ENCODE measurements at regions of chr19 and their contacts with region 1.

Region 1: GRCh38 chr19:48110350-48110966 is at the start of gene PLA2G4C:
- DNase-seq: peak; percentile 94 to 100
- ATAC-seq: peak; percentile 80 to 83
- H3K4me3 ChIP-seq: peak within 1 kb of the TSS; percentile 48
- H3K27ac ChIP-seq: peak within 1 kb of the TSS; percentile 87 to 92
- H3K4me1 ChIP-seq: peaks cover 15% of the 10 kb centered on the region
- CTCF ChIP-seq: no peak
- EP300 ChIP-seq: no peak
- POLR2A ChIP-seq: peak; percentile 89
- RAD21 ChIP-seq: no peak
- polyA plus RNA-seq, gene PLA2G4C: 2.1 and 2.8 TPM in 2 replicates

Region 2: GRCh38 chr19:48029431-48029830 is 81.0 kb before region 1 on chr19:
- CTCF ChIA-PET with region 1: no interaction called
- POLR2A ChIA-PET with region 1: no interaction called
- DNase-seq: no peak
- ATAC-seq: no peak
- H3K4me3 ChIP-seq: no peak overlapping the region
- H3K27ac ChIP-seq: no peak overlapping the region
- H3K4me1 ChIP-seq: no peaks in the 10 kb centered on the region
- CTCF ChIP-seq: no peak
- EP300 ChIP-seq: no peak
- POLR2A ChIP-seq: no peak
- RAD21 ChIP-seq: no peak

Region 3: DNA sequence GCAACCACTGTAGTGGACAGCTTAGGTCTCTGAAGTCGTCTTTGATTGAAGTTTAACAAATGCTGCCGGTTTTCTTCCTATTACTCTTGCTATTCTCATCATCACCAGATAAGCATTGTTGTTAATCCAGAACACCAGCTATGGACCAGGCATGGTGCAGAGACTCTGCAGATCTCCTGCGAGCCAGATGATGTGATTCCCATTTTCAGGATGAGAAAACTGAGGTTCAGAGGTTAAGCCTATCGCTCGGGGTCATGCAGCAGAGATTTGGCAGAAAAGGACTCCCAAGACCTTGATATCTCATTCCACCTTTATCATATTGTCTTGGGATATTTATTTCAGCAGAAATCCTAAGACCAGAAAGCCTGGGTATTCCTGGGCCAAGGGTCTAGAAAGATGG is 50.1 kb before region 1 on chr19:
- CTCF ChIA-PET with region 1: no interaction called
- POLR2A ChIA-PET with region 1: no interaction called
- DNase-seq: no peak
- ATAC-seq: no peak
- H3K4me3 ChIP-seq: no peak overlapping the region
- H3K27ac ChIP-seq: no peak overlapping the region
- H3K4me1 ChIP-seq: no peaks in the 10 kb centered on the region
- CTCF ChIP-seq: no peak
- EP300 ChIP-seq: no peak
- POLR2A ChIP-seq: no peak
- RAD21 ChIP-seq: no peak

Region 4: GRCh38 chr19:48085904-48086864 is 24.3 kb before region 1 on chr19:
- CTCF ChIA-PET with region 1: interaction called, 10 read pairs
- POLR2A ChIA-PET with region 1: interaction called, 5 read pairs
- DNase-seq: no peak
- ATAC-seq: peak; percentile 58 to 75; a peak in 5 of 6 replicates
- H3K4me3 ChIP-seq: no peak overlapping the region
- H3K27ac ChIP-seq: no peak overlapping the region
- H3K4me1 ChIP-seq: no peaks in the 10 kb centered on the region
- CTCF ChIP-seq: no peak
- EP300 ChIP-seq: no peak
- POLR2A ChIP-seq: no peak
- RAD21 ChIP-seq: no peak

Region 5: DNA sequence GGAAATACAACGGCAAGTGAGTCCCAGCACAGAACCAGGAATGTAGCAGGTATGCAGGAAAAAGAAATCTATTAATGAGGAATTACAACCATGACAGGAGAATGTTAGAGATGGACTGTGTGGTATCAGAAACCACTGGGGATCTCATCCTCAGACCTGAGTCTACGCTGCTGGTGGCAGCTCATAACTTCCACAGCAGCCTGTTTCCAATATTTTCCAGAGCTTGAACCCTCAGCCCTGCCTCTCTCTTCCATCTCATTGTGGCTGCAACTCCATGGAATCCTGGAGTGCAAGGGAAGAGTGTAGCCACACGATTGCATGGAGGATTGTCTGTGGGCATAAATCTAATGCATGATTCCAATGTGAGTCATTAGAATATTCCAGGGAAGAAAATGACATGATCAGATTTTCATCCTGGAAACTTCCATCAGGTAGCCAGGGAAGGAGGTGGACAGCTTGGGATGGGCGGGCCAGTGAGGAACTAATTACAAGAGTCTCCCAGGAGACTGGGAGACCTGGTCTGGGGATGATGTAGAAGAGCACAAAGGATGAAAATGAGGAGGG is 14.8 kb before region 1 on chr19:
- CTCF ChIA-PET with region 1: interaction called, 17 read pairs
- POLR2A ChIA-PET with region 1: interaction called, 3 read pairs
- DNase-seq: no peak
- ATAC-seq: no peak
- H3K4me3 ChIP-seq: no peak overlapping the region
- H3K27ac ChIP-seq: no peak overlapping the region
- H3K4me1 ChIP-seq: peaks cover 5% of the 10 kb centered on the region; the same call in 1 of the 3 replicates
- CTCF ChIP-seq: no peak
- EP300 ChIP-seq: no peak
- POLR2A ChIP-seq: no peak
- RAD21 ChIP-seq: no peak

Region 6: DNA sequence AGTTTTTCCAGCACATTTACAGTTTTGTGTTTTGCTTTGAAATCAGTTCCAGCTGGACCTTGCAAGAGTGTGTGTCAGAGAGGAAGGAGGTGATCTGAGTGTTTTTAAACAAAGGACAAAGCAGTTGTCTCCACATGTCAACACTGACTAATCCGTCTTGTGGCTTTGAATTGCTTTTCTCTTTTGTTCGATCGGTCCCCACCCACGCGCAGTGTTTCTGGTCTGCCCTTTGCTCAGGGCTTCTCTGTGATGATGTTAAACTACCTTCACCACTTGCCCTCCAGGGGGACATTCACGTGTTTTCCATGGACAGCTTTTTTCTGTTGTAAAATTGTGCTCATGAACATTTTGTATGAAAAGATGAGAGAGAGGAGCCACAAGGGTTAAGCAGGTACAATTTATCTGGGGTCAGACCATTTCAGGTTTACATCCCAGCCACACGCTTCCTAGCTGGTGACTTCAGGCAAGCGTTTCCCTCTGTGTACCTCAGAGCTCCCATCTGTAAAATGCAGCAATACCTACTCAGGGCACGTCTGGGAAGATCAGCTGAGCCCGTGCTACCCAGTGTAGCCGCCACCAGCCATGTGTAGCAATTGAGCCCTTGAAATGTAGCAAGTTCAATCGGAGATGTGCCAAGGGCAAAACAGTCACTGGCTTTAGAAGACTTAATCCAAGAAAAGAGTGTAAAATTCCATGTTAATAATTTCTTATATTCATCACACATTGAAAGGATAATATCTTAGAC is 13.6 kb after region 1 on chr19:
- CTCF ChIA-PET with region 1: interaction called, 111 read pairs
- POLR2A ChIA-PET with region 1: interaction called, 5 read pairs
- DNase-seq: peak in 1 of 2 experiments; percentile 36
- ATAC-seq: peak; percentile 34 to 35; a peak in 2 of 6 replicates
- H3K4me3 ChIP-seq: no peak overlapping the region
- H3K27ac ChIP-seq: no peak overlapping the region
- H3K4me1 ChIP-seq: no peaks in the 10 kb centered on the region
- CTCF ChIP-seq: no peak
- EP300 ChIP-seq: no peak
- POLR2A ChIP-seq: no peak
- RAD21 ChIP-seq: no peak

Region 7: GRCh38 chr19:48135411-48135810 is 25.0 kb after region 1 on chr19:
- CTCF ChIA-PET with region 1: interaction called, 11 read pairs
- POLR2A ChIA-PET with region 1: interaction called, 4 read pairs
- DNase-seq: peak in 1 of 2 experiments; percentile 57
- ATAC-seq: peak in 1 of 2 experiments; percentile 45; a peak in 3 of 6 replicates
- H3K4me3 ChIP-seq: no peak overlapping the region
- H3K27ac ChIP-seq: no peak overlapping the region; a peak in 1 of 6 replicates
- H3K4me1 ChIP-seq: no peaks in the 10 kb centered on the region
- CTCF ChIP-seq: no peak
- EP300 ChIP-seq: no peak
- POLR2A ChIP-seq: no peak
- RAD21 ChIP-seq: no peak

Region 8: GRCh38 chr19:48203732-48204628 is 93.5 kb after region 1 on chr19:
- CTCF ChIA-PET with region 1: interaction called, 4 read pairs
- POLR2A ChIA-PET with region 1: interaction called, 10 read pairs
- DNase-seq: peak; percentile 98 to 99
- ATAC-seq: peak; percentile 99
- H3K4me3 ChIP-seq: peak overlapping the region; percentile 71
- H3K27ac ChIP-seq: peak overlapping the region; percentile 85 to 90
- H3K4me1 ChIP-seq: peaks cover 9% of the 10 kb centered on the region; the same call in 2 of the 3 replicates
- CTCF ChIP-seq: no peak
- EP300 ChIP-seq: no peak
- POLR2A ChIP-seq: peak; percentile 81
- RAD21 ChIP-seq: no peak

Region 9: DNA sequence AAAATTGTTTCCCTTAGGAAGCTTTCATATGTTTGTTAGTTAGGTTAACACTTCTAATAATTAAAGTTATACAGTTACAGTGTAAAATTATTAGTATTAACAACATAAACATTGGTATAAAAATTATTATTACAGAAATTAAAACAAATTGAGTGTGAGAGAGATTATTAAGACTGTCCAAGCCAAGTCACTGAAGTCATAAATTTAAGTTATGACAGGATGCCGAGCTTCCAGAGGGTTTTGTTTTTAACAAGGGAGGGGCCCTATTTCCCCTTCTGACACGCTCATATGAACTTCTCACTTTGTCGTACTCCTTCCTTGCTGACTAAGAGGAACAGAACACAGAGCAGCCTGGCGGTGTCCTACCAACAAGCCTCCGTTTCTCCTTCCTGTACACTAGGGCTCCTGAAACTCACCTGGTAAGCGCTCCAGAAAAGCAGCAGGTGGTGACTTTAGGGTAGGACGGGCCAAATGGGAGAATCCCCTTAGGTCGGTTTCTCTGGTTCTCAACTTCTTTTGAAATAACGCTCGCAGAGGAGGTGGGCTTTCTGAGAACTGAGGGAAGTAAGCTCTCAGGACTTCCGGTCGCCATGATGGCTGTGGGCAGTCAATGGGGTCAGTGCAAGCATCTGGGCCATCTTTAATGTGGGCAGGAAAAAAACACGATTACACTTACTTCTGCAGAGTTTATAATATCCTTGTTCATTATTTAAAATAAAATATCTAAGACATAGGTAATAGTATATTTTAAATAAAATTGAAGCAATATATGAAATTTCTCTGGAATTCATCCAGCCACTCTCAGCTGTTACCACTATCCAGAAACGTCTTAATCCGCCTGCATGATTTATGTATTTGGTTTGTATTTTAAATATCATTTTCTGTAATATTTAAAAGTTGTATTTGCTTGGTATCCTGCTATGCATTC is 145.2 kb after region 1 on chr19 and contains the start of gene CARD8:
- CTCF ChIA-PET with region 1: interaction called, 17 read pairs
- POLR2A ChIA-PET with region 1: interaction called, 9 read pairs
- DNase-seq: peak; percentile 88 to 93
- ATAC-seq: peak; percentile 95 to 98
- H3K4me3 ChIP-seq: peak within 1 kb of the TSS; percentile 57
- H3K27ac ChIP-seq: peak within 1 kb of the TSS; percentile 87
- H3K4me1 ChIP-seq: peaks cover 13% of the 10 kb centered on the region
- CTCF ChIP-seq: no peak
- EP300 ChIP-seq: no peak
- POLR2A ChIP-seq: peak; percentile 53
- RAD21 ChIP-seq: no peak
- polyA plus RNA-seq, gene CARD8: 27.4 and 34.7 TPM in 2 replicates

Measured in A549 (cell line).